Activated CD8-positive, alpha-beta T cell treated with anti-CD3 and anti-CD28 coated beads for 36 hours (primary cell): ENCODE measurements at regions of chr1 and their contacts with region 1.

Region 1: GRCh38 chr1:66242646-66243547 is 291.1 kb upstream of the SGIP1 start:
- DNase-seq: peak; percentile 84
- ATAC-seq: peak; percentile 61
- H3K4me3 Mint-ChIP-seq: no peak overlapping the region
- H3K27ac Mint-ChIP-seq: no peak overlapping the region
- H3K4me1 Mint-ChIP-seq: peaks cover 21% of the 10 kb centered on the region
- H3K27me3 Mint-ChIP-seq: peaks cover 6% of the 10 kb centered on the region
- CTCF ChIP-seq: peak; percentile 99

Region 2: DNA sequence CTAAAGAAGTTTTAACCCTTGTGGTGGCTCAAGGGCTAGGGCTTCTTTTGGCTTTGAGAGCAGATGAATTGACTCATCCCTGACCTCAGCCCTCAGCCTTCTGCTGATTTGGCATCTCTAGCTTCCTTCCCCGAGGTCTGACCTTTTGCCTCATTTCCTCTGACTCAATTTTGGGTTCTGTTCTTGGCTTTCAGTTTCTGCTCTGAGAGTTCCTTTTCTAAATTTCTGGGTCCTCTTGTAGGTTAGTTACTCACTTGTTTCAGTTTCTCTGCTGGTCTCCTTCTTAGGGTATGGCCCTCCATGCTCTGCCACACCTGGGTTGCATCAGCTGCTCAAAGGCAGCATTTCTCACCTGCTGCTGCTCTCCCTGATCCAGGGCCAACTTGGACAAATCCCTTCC is 430.8 kb before region 1 on chr1:
- CTCF ChIA-PET with region 1: interaction called, 9 read pairs
- POLR2A ChIA-PET with region 1: no interaction called
- intact Hi-C with region 1: loop called (anchors 10 kb)
- DNase-seq: peak; percentile 89
- ATAC-seq: peak; percentile 96
- H3K4me3 Mint-ChIP-seq: no peak overlapping the region
- H3K27ac Mint-ChIP-seq: peak overlapping the region; percentile 87
- H3K4me1 Mint-ChIP-seq: peaks cover 25% of the 10 kb centered on the region
- H3K27me3 Mint-ChIP-seq: peaks cover 21% of the 10 kb centered on the region
- CTCF ChIP-seq: no peak

Region 3: GRCh38 chr1:65992165-65992840 is 250.6 kb before region 1 on chr1:
- CTCF ChIA-PET with region 1: interaction called, 12 read pairs
- POLR2A ChIA-PET with region 1: no interaction called
- intact Hi-C with region 1: no loop called
- DNase-seq: no peak
- ATAC-seq: no peak
- H3K4me3 Mint-ChIP-seq: no peak overlapping the region
- H3K27ac Mint-ChIP-seq: no peak overlapping the region
- H3K4me1 Mint-ChIP-seq: no peaks in the 10 kb centered on the region
- H3K27me3 Mint-ChIP-seq: peaks cover 1% of the 10 kb centered on the region
- CTCF ChIP-seq: no peak

Region 4: DNA sequence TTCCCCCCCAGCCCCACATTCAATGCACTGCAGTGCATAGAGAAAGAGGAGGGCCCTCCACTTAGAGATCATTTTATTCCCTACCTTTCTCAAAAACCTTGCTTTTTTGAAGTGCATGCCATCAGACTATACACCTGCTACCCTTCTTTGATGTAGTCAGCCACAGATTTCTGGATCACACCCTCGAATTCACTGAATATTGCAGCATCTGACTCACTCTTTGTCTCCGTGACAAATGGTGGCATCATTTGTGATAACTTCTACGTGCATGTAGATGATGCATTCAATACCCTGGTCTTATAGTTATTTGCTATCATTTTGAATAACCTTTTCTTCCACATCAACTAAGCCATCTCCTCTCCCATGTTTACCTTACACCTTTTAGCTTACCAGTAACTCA is 19.2 kb before region 1 on chr1:
- CTCF ChIA-PET with region 1: interaction called, 47 read pairs
- POLR2A ChIA-PET with region 1: no interaction called
- intact Hi-C with region 1: no loop called
- DNase-seq: no peak
- ATAC-seq: peak; percentile 24
- H3K4me3 Mint-ChIP-seq: no peak overlapping the region
- H3K27ac Mint-ChIP-seq: no peak overlapping the region
- H3K4me1 Mint-ChIP-seq: no peaks in the 10 kb centered on the region
- H3K27me3 Mint-ChIP-seq: no peaks in the 10 kb centered on the region
- CTCF ChIP-seq: no peak

Region 5: DNA sequence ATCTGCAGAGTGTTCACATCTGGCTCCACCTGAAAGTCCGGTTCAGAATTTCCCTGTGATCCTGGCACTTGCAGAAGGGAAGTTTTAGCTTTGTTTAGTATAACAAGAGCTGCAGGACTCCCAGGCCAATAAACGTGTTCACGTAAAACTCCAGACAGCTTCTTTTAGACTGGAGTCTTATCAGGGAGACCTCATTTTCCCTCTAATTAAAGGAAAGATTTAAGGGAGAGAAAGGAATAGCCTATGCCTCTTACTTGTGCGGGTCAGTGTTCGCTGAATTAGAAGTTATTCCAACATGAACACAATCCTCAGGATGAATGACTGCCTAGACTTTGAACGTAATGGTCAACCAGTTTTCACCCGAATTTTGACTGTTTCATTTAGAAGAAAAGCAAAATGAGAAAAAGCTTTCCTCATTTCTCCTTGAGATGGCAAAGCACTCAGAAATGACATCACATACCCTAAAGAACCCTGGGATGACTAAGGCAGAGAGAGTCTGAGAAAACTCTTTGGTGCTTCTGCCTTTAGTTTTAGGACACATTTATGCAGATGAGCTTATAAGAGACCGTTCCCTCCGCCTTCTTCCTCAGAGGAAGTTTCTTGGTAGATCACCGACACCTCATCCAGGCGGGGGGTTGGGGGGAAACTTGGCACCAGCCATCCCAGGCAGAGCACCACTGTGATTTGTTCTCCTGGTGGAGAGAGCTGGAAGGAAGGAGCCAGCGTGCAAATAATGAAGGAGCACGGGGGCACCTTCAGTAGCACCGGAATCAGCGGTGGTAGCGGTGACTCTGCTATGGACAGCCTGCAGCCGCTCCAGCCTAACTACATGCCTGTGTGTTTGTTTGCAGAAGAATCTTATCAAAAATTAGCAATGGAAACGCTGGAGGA is 89.0 kb after region 1 on chr1:
- CTCF ChIA-PET with region 1: interaction called, 13 read pairs
- POLR2A ChIA-PET with region 1: interaction called, 4 read pairs
- intact Hi-C with region 1: no loop called
- DNase-seq: peak; percentile 70
- ATAC-seq: peak; percentile 16
- H3K4me3 Mint-ChIP-seq: peak overlapping the region; percentile 99
- H3K27ac Mint-ChIP-seq: peak overlapping the region; percentile 98
- H3K4me1 Mint-ChIP-seq: peaks cover 48% of the 10 kb centered on the region
- H3K27me3 Mint-ChIP-seq: no peaks in the 10 kb centered on the region
- CTCF ChIP-seq: no peak

Region 6: DNA sequence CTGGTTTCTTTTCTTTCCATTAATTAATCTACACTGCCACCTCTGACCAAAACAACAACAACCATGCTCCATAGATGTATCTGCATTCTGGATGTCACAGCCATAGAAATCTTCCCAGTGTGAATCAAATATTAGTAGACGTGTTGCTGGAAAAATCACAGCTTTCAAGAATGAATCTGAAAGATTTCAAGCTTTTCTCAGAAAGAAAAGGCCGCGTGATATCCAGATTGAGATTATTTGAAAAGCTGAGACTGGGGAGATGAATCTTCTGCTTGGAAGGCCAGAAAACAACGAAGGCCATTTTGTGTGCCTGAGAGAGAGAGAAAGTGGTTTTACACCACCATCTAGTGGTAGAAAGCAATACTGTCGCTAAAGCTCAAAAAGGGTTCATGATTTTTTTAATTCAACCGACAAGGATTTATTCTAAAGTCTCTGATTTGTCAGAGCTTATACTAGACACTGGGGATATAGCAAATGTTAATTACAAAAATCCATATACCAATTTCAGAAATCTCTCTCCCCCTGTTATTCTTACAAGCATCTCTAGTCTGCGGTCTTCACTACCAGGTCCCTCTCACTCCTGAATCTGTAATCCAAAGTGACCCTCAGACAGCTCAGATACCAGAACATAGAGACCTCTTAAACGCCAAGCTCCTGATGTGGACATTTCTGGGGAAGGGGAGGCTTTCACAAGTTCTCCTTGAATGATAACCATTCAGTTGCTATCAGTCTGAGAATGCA is 203.5 kb after region 1 on chr1:
- CTCF ChIA-PET with region 1: interaction called, 512 read pairs
- POLR2A ChIA-PET with region 1: interaction called, 15 read pairs
- intact Hi-C with region 1: no loop called
- DNase-seq: peak; percentile 31
- ATAC-seq: peak; percentile 66
- H3K4me3 Mint-ChIP-seq: peak overlapping the region; percentile 68
- H3K27ac Mint-ChIP-seq: peak overlapping the region; percentile 96
- H3K4me1 Mint-ChIP-seq: peaks cover 23% of the 10 kb centered on the region
- H3K27me3 Mint-ChIP-seq: peaks cover 9% of the 10 kb centered on the region
- CTCF ChIP-seq: peak; percentile 77